ENCODE measurements at regions of chr6 and their contacts with region 1.

Region 1: DNA sequence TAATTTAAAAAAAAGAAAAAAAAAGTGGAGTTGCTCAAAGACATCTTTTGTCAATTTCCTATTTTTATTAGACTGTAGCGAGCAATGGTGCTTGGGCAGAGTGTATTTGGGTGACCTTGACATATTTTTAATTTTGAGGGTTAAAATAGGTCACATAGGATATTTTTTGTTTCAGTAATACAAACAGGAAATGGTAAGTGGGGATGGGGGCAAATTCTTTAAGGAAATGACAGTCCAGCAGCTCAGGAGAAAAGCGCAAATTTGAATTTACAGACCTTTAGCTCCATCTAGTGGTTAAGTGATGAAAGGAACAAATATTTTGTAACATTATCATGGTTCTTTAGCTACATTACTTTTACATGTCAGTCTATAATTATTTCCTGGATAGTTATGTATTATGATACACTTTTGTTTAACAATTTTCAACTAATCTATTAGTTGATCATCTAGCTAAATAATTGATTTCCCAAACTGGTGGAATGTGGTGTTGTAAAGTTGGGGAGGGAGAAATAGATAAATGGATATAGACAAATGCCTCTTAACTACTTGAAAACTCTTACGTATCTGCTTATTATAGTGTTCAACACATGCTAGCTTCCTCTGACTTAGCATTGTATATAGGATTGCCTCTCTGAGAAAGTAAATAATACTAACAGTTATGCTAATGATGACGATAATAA is 10.0 kb downstream of the CITED2 start:
- DNase-seq: peak; percentile 74
- ATAC-seq: peak; percentile 36
- H3K4me3 ChIP-seq: no peak overlapping the region
- H3K4me3 Mint-ChIP-seq: no peak overlapping the region
- H3K27ac ChIP-seq: no peak overlapping the region
- H3K27ac Mint-ChIP-seq: peak overlapping the region; percentile 54
- H3K4me1 ChIP-seq: peaks cover 8 to 11% of the 10 kb centered on the region in 2 donors
- H3K4me1 Mint-ChIP-seq: peaks cover 28% of the 10 kb centered on the region
- H3K27me3 ChIP-seq: no peaks in the 10 kb centered on the region
- H3K27me3 Mint-ChIP-seq: no peaks in the 10 kb centered on the region
- CTCF ChIP-seq: peak; percentile 93

Region 2: GRCh38 chr6:138817822-138818308 is 546.6 kb before region 1 on chr6:
- CTCF ChIA-PET with region 1: interaction called, 58 read pairs
- POLR2A ChIA-PET with region 1: no interaction called
- intact Hi-C with region 1: no loop called
- DNase-seq: peak; percentile 13
- ATAC-seq: peak; percentile 15
- H3K4me3 ChIP-seq: no peak overlapping the region
- H3K4me3 Mint-ChIP-seq: no peak overlapping the region
- H3K27ac ChIP-seq: peak overlapping the region in 1 of 2 donors; percentile 28
- H3K27ac Mint-ChIP-seq: peak overlapping the region; percentile 68
- H3K4me1 ChIP-seq: peaks cover 11 to 20% of the 10 kb centered on the region in 2 donors
- H3K4me1 Mint-ChIP-seq: peaks cover 30% of the 10 kb centered on the region
- H3K27me3 ChIP-seq: no peaks in the 10 kb centered on the region
- H3K27me3 Mint-ChIP-seq: no peaks in the 10 kb centered on the region
- CTCF ChIP-seq: no peak

Region 3: DNA sequence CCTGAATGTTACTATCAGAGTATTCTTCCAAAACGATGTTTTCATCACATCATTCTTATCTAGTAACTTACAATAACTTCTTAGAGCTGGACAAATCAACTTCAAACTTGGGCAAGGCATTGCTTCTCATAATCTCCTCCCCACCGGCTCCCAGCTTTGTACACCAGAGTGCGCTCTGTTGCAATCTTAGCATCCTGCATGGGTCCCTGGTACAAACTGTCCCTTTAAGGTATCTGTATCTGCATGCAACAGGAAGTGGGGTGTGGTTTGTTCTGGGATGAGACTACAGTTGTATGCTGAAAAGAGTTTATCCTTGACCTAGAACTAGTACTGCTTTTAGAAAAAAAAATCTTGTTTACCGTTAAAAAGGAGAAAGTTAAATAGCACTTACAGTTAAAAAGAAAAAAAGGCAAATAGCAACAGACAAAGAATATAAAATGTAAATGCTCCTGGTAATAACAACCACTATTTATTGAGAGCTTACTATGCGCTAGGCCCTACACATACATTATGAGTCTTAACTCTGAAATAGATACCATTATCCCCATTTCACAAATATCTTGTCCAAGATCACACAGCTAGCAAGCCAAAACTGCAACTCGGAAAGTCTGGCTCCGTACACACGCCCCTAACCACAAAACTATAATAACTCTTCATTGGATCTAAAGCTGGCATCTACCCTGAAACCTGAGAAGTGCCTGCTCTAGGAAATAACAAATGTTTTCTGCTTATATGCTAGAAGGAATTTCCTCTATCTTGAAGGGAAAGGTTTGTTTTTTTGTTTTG is 239.4 kb before region 1 on chr6:
- CTCF ChIA-PET with region 1: interaction called, 66 read pairs
- POLR2A ChIA-PET with region 1: no interaction called
- intact Hi-C with region 1: loop called (anchors 1 kb)
- DNase-seq: peak; percentile 84
- ATAC-seq: peak; percentile 100
- H3K4me3 ChIP-seq: peak overlapping the region in 2 of 5 experiments; percentile 13 to 18
- H3K4me3 Mint-ChIP-seq: peak overlapping the region; percentile 76
- H3K27ac ChIP-seq: peak overlapping the region; percentile 58 to 76
- H3K27ac Mint-ChIP-seq: peak overlapping the region; percentile 93
- H3K4me1 ChIP-seq: peaks cover 20 to 22% of the 10 kb centered on the region in 2 donors
- H3K4me1 Mint-ChIP-seq: peaks cover 41% of the 10 kb centered on the region
- H3K27me3 ChIP-seq: no peaks in the 10 kb centered on the region
- H3K27me3 Mint-ChIP-seq: no peaks in the 10 kb centered on the region
- CTCF ChIP-seq: peak; percentile 73

Region 4: GRCh38 chr6:139250296-139251044 is 114.0 kb before region 1 on chr6:
- CTCF ChIA-PET with region 1: interaction called, 24 read pairs
- POLR2A ChIA-PET with region 1: no interaction called
- intact Hi-C with region 1: loop called (anchors 1 kb)
- DNase-seq: peak; percentile 65
- ATAC-seq: peak; percentile 99
- H3K4me3 ChIP-seq: no peak overlapping the region
- H3K4me3 Mint-ChIP-seq: no peak overlapping the region
- H3K27ac ChIP-seq: no peak overlapping the region
- H3K27ac Mint-ChIP-seq: no peak overlapping the region
- H3K4me1 ChIP-seq: peaks cover 5 to 6% of the 10 kb centered on the region in 2 donors
- H3K4me1 Mint-ChIP-seq: peaks cover 13% of the 10 kb centered on the region
- H3K27me3 ChIP-seq: no peaks in the 10 kb centered on the region
- H3K27me3 Mint-ChIP-seq: no peaks in the 10 kb centered on the region
- CTCF ChIP-seq: peak; percentile 78

Region 5: GRCh38 chr6:139291813-139292619 is 72.4 kb before region 1 on chr6 and contains the start of gene TXLNB:
- CTCF ChIA-PET with region 1: interaction called, 11 read pairs
- POLR2A ChIA-PET with region 1: no interaction called
- intact Hi-C with region 1: loop called (anchors 2 kb)
- DNase-seq: peak; percentile 77
- ATAC-seq: peak; percentile 49
- H3K4me3 ChIP-seq: peak within 1 kb of the TSS; percentile 17 to 66 (median 34)
- H3K4me3 Mint-ChIP-seq: peak within 1 kb of the TSS; percentile 84
- H3K27ac ChIP-seq: peak within 1 kb of the TSS; percentile 93
- H3K27ac Mint-ChIP-seq: peak within 1 kb of the TSS; percentile 95
- H3K4me1 ChIP-seq: peaks cover 41 to 49% of the 10 kb centered on the region in 2 donors
- H3K4me1 Mint-ChIP-seq: peaks cover 73% of the 10 kb centered on the region
- H3K27me3 ChIP-seq: no peaks in the 10 kb centered on the region
- H3K27me3 Mint-ChIP-seq: no peaks in the 10 kb centered on the region
- CTCF ChIP-seq: no peak
- total RNA-seq, gene TXLNB: 3.3 and 3.6 TPM in 2 replicates

Measured in B cell (primary cell).